ENCODE measurements at regions of chr9 and their contacts with region 1.

Region 1: GRCh38 chr9:130053504-130054324 is at the start of gene GPR107:
- DNase-seq: peak; percentile 74 to 83
- ATAC-seq: peak; percentile 95
- total RNA-seq, gene GPR107: 44.6 to 48.6 TPM

Region 2: GRCh38 chr9:129884220-129885017 is 169.3 kb before region 1 on chr9:
- intact Hi-C with region 1: loop called in 1 of 2 experiments (anchors 10 kb)
- DNase-seq: peak; percentile 95 to 97
- ATAC-seq: peak; percentile 84

Region 3: DNA sequence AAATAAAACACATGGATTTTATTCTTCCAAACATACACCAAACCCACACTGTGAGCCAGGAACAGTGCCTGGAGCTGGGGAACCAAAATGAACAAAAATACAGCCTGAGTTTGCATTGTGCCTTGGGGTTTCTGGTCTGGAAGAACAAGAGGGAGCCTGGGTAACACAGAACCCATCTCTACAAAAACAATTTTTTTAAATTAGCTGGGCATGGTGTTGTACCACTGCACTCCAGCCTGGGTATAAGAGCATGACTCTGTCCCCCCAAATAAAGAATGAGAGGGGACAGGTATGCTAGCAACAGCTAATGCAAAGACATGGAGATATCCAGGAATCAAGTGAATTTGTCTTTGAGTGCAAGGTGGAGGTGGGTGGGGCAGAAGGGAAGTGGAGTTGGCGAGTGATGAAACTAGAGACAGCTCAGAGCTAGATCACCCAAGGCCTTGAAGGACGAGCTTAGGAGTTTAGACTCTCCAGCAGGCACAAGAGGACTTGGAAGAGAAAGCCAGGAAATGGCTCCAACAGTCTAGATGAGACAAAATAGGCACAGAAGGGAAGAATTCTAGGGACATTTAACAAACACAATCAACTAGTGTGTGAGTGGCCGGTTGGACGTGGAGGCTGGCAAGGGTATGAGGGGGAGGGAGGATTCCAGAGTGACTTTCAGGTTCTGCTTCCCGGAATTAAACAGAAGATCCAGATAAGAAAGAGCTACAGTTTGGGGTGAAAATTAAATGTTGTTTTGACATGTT is 58.1 kb before region 1 on chr9:
- intact Hi-C with region 1: no loop called
- DNase-seq: no peak
- ATAC-seq: no peak

Region 4: DNA sequence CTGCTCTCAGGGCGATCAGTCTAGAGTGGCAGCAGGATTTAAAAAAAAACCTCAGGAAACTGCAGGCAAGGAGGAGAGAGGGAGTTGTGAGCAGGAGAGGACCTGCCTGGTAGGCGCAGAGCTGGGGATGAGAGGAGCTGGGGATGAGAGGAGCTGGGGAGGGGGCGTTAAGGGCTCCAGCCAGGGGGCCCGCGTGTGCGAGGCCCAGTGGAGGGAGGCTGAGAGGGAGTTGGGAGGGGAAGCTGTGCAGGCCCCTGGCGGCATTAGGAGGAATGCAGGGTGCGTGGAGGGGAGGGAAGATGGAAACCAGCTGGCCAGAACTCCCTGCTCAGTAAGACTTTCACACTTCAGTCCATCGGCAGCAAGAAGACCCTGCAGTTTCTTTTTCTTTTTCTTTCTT is 166.6 kb after region 1 on chr9:
- intact Hi-C with region 1: no loop called
- DNase-seq: no peak
- ATAC-seq: no peak